MCF 10A (cell line): ENCODE measurements at regions of chr9 and their contacts with region 1.

Region 1: DNA sequence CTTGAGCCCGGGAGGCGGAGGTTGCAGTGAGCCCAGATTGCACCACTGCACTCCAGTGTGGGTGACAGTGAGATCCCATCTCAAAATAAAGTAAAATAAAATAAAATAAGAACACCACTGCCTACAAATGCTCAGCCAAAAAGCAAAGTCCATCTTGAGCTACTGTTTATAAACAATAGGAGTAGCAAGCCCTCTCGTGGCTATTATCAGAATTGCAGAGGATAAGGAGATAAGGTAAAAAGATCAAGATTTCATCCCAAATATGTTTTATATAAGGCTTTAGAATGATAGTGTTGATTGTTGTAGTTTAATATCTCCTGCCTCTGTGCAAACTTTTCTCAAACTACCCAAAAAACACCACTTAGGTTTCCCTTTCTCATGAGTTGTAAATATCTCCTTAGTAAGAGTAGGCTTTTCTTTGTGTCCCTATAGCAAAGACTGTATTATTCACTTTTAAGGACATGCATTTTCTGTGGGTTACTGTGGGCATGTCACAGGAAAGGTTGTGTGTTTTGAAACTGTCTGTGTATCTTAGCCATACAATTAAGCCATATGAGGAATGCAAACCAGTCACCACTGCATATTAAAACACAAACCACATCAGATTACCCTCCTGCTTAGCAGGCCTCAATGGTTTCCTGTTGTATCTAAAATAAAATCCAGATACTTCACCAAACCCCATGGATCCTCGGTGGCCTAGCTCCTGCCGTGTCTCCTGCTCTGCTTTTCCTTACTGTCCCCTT is 31.8 kb upstream of the CKS2 start:
- DNase-seq: peak; percentile 72
- H3K4me3 Mint-ChIP-seq: no peak overlapping the region
- H3K27ac Mint-ChIP-seq: no peak overlapping the region
- H3K4me1 Mint-ChIP-seq: peaks cover 12% of the 10 kb centered on the region
- H3K27me3 Mint-ChIP-seq: no peaks in the 10 kb centered on the region
- CTCF ChIP-seq: peak; percentile 51

Region 2: DNA sequence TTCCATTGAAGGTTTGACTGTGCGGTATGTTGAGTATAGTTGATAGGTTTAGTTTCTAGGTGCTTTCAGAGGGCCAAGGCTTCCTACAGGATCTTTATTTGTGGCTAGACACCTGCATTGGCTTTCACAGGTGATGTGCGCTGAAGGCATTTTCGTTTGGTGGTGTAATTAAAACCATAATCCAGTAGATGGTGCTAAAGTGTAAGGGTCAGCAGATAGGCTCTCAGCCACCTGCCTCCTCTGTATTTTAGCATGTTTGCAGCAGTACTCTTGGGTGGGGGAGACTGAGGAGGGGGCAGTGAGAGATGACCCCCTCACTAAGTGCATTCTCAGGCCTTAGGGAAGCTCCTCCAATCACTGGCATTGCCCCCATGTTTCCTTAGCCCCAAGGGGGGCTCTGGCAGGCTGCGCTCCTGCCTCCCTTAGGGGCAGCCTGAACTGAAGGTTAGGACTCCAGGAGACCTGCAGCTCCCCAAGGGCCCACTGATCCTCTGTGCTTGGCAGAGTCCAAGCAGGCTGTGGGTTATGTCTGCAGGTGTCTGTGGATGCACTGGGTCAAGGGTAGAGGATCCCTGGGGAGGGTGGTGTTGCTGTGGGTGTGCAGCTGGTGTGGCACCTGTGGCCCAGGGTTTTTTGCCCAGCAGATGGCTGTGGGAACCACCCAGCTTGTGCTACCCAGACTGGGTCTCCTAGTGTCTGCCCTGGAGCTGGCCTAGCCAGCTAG is 1328.2 kb before region 1 on chr9:
- CTCF ChIA-PET with region 1: interaction called, 3 read pairs
- POLR2A ChIA-PET with region 1: no interaction called
- intact Hi-C with region 1: loop called (anchors 5 kb)
- DNase-seq: peak; percentile 56
- H3K4me3 Mint-ChIP-seq: no peak overlapping the region
- H3K27ac Mint-ChIP-seq: no peak overlapping the region
- H3K4me1 Mint-ChIP-seq: no peaks in the 10 kb centered on the region
- H3K27me3 Mint-ChIP-seq: no peaks in the 10 kb centered on the region
- CTCF ChIP-seq: peak; percentile 75

Region 3: GRCh38 chr9:88593537-88594185 is 685.5 kb before region 1 on chr9:
- CTCF ChIA-PET with region 1: interaction called, 3 read pairs
- POLR2A ChIA-PET with region 1: no interaction called
- intact Hi-C with region 1: loop called (anchors 1 kb)
- DNase-seq: peak; percentile 73
- H3K4me3 Mint-ChIP-seq: no peak overlapping the region
- H3K27ac Mint-ChIP-seq: no peak overlapping the region
- H3K4me1 Mint-ChIP-seq: no peaks in the 10 kb centered on the region
- H3K27me3 Mint-ChIP-seq: no peaks in the 10 kb centered on the region
- CTCF ChIP-seq: peak; percentile 65

Region 4: DNA sequence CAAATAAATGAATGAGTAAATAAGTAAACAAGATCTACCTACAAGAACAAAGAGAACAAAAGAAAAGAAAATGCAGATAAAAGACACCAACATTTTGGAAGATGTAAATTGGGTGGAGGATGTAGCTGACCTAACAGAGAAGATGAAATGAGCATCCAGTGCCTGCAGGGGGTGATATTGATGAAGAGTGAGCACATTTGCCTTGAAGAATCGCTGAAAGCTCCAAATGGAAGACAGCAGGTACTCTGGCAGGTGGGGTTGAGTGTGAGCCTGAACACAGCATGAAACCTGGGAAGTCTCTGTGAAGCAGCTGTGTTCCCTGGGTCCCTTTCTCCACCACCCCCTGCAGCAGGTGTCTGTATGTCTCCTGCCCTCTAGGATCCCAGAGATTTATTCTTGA is 618.6 kb before region 1 on chr9:
- CTCF ChIA-PET with region 1: no interaction called
- POLR2A ChIA-PET with region 1: no interaction called
- intact Hi-C with region 1: loop called (anchors 5 kb)
- DNase-seq: peak; percentile 65
- H3K4me3 Mint-ChIP-seq: no peak overlapping the region
- H3K27ac Mint-ChIP-seq: no peak overlapping the region
- H3K4me1 Mint-ChIP-seq: peaks cover 10% of the 10 kb centered on the region
- H3K27me3 Mint-ChIP-seq: no peaks in the 10 kb centered on the region
- CTCF ChIP-seq: peak; percentile 45

Region 5: DNA sequence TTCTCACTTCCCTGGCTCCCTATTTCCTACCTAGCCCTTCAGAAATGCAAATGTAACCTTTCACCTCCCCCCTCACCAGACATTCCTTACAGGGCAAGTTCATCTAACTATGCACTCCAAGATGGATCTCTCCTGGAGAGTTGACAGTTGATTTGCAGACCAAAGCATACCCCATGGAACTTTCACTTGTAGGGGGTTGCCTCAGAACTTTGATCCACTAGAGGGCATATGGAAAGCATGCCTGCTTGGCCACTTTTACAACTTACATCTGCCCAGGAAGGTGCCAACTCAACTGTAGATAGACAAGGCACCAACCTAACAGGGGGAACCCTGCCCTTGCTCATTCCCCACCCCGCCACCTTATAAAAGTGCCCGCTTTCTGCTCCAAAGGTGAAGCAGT is 556.4 kb before region 1 on chr9:
- CTCF ChIA-PET with region 1: no interaction called
- POLR2A ChIA-PET with region 1: no interaction called
- intact Hi-C with region 1: loop called (anchors 2 kb)
- DNase-seq: peak; percentile 55
- H3K4me3 Mint-ChIP-seq: no peak overlapping the region
- H3K27ac Mint-ChIP-seq: no peak overlapping the region
- H3K4me1 Mint-ChIP-seq: peaks cover 7% of the 10 kb centered on the region
- H3K27me3 Mint-ChIP-seq: no peaks in the 10 kb centered on the region
- CTCF ChIP-seq: peak; percentile 47

Region 6: DNA sequence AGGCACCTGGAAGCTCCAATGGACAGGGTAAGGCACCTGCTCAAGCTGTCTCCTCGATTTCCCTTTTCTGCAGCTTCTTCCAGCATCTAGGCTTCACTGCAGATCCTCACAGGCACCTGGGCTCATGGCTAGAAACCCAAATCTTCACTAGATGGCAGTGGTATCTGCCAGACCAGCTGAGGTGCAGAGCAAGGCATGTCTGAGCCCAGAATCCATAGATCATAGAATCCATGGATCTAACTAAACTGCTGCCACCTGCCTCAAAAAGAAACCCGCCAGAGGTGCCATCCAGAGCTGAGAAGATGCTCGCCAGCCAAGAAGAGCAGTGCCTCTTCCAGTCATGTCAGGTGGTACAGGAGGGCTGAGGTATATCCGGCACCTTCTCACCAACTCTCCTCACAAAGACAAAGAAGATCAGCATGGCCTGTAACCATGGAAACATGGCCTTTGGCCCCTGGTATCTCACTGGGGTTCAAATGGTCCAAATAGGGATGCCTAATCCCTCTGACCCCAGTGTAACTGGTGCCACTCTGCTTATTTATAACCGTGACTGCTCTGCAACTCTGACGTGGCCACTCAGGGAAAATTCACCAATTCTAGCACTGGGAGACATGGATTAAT is 107.4 kb before region 1 on chr9:
- CTCF ChIA-PET with region 1: no interaction called
- POLR2A ChIA-PET with region 1: no interaction called
- intact Hi-C with region 1: loop called (anchors 5 kb)
- DNase-seq: peak; percentile 16
- H3K4me3 Mint-ChIP-seq: no peak overlapping the region
- H3K27ac Mint-ChIP-seq: no peak overlapping the region
- H3K4me1 Mint-ChIP-seq: no peaks in the 10 kb centered on the region
- H3K27me3 Mint-ChIP-seq: no peaks in the 10 kb centered on the region
- CTCF ChIP-seq: peak; percentile 10

Region 7: GRCh38 chr9:89483592-89484522 is 204.7 kb after region 1 on chr9:
- CTCF ChIA-PET with region 1: no interaction called
- POLR2A ChIA-PET with region 1: no interaction called
- intact Hi-C with region 1: no loop called
- DNase-seq: no peak
- H3K4me3 Mint-ChIP-seq: no peak overlapping the region
- H3K27ac Mint-ChIP-seq: no peak overlapping the region
- H3K4me1 Mint-ChIP-seq: no peaks in the 10 kb centered on the region
- H3K27me3 Mint-ChIP-seq: no peaks in the 10 kb centered on the region
- CTCF ChIP-seq: no peak